ENCODE measurements at regions of chr17 and their contacts with region 1.

Region 1: DNA sequence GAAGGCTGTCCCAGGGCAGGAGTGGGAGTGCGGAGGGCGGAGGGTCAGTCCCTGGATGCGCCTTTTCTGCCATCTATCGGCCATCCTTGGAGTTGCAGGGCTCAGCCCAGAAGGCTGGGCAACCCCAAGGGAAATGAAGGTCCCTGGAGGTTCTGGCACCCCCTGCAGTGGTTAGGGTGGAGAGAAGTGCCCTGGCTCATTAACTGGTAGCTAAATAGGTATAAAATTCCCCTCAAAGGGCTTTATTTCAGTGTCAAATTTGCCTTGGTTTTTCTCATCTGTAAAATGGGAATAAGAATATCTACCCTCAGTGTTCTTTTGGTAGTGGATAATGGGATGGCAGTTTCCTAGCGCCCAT is 22.4 kb downstream of the C17orf75 start:
- DNase-seq: peak; percentile 89
- H3K4me3 ChIP-seq: no peak overlapping the region; a peak in 1 of 4 replicates
- H3K27ac ChIP-seq: no peak overlapping the region
- H3K4me1 ChIP-seq: peaks cover 7 to 8% of the 10 kb centered on the region in 2 experiments; a peak in 1 of 4 replicates
- H3K27me3 ChIP-seq: no peaks in the 10 kb centered on the region
- CTCF ChIP-seq: peak; percentile 96
- EP300 ChIP-seq: no peak
- RAD21 ChIP-seq: peak; percentile 94

Region 2: DNA sequence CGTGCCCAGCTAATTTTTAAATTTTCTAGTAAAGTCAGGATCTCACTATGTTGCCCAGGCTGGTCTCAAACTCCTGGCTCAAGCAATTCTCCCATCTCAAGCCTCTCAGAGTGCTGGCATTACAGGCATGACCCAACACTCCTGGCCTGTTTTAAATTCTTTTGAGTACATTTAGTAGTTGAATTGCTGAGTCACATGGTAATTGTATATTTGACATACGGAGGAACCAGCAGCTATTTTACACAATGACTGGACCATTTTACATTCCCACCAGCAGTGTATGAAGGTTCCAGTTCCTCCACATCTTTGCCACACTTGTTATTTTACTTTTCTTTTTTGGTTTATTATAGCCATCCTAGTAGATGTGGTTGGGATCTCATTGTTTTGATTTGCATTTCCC is 133.7 kb before region 1 on chr17:
- CTCF ChIA-PET with region 1: no interaction called
- POLR2A ChIA-PET with region 1: no interaction called
- DNase-seq: no peak
- H3K4me3 ChIP-seq: no peak overlapping the region
- H3K27ac ChIP-seq: no peak overlapping the region
- H3K4me1 ChIP-seq: no peaks in the 10 kb centered on the region
- H3K27me3 ChIP-seq: no peaks in the 10 kb centered on the region
- CTCF ChIP-seq: no peak
- EP300 ChIP-seq: no peak
- RAD21 ChIP-seq: no peak

Region 3: DNA sequence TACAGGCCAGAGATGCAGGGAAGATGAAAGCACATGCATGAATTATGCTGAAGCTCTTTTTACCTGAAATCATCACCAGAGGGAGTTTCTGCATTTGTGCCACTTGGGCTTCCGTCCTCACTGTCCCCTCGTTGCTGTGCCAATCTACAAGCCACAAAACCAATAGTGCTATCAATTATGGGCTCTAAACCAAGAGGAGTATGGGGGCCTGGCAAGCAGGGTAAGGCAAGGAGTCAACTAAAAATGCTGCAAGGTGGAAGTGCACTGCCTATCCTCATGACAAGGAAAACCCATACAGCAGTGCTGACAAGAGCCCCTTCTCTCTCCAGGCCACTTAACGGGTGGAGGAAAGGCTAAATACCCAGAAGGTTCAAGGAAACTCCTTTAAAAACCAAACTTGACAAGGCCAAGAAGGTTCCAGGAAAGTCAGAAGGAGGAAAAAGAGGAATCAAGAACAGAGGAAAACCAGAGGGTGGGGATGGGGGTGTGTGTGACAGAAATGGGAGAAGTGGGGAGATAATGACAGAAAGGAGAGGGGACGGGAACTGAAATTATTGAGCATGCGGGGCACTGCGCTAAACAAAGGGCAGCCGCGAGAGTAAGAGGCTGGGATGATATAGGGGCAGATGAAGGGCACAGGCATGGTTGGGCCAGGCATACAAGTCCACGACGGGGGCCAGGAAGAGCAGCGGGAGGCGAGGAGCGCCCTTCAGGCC is 21.8 kb after region 1 on chr17:
- CTCF ChIA-PET with region 1: interaction called, 10 read pairs
- POLR2A ChIA-PET with region 1: no interaction called
- DNase-seq: peak; percentile 58
- H3K4me3 ChIP-seq: peak overlapping the region; percentile 59 to 69
- H3K27ac ChIP-seq: peak overlapping the region; percentile 36 to 84
- H3K4me1 ChIP-seq: peaks cover 0 to 15% of the 10 kb centered on the region in 2 experiments; a peak in 1 of 4 replicates
- H3K27me3 ChIP-seq: no peaks in the 10 kb centered on the region
- CTCF ChIP-seq: peak; percentile 31
- EP300 ChIP-seq: no peak
- RAD21 ChIP-seq: no peak

Region 4: DNA sequence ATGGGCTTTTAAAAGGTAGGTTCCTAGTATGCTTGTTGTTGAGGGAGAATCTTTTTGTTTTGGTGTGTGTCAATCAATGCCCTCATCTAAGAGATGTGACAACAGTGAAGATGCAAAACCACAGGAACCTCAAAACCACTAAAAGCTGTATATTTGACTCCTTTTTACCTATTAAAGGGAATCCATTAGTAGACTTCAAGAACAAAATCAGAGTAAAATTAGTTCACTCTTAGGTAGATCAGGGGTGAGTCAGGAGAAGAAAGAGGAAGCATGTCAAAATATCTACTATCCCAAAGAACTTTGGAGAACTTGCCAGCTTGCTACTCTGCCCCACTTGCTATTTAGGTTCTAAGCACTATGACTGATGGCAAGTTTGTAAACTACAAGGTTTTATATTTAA is 256.4 kb after region 1 on chr17:
- CTCF ChIA-PET with region 1: no interaction called
- POLR2A ChIA-PET with region 1: no interaction called
- DNase-seq: no peak
- H3K4me3 ChIP-seq: no peak overlapping the region
- H3K27ac ChIP-seq: no peak overlapping the region
- H3K4me1 ChIP-seq: no peaks in the 10 kb centered on the region; a peak in 1 of 4 replicates
- H3K27me3 ChIP-seq: no peaks in the 10 kb centered on the region
- CTCF ChIP-seq: no peak
- EP300 ChIP-seq: no peak
- RAD21 ChIP-seq: no peak

Measured in SK-N-SH (cell line).